Ascending aorta (tissue), 2 donors: ENCODE measurements at regions of chr16 and their contacts with region 1.

Region 1: DNA sequence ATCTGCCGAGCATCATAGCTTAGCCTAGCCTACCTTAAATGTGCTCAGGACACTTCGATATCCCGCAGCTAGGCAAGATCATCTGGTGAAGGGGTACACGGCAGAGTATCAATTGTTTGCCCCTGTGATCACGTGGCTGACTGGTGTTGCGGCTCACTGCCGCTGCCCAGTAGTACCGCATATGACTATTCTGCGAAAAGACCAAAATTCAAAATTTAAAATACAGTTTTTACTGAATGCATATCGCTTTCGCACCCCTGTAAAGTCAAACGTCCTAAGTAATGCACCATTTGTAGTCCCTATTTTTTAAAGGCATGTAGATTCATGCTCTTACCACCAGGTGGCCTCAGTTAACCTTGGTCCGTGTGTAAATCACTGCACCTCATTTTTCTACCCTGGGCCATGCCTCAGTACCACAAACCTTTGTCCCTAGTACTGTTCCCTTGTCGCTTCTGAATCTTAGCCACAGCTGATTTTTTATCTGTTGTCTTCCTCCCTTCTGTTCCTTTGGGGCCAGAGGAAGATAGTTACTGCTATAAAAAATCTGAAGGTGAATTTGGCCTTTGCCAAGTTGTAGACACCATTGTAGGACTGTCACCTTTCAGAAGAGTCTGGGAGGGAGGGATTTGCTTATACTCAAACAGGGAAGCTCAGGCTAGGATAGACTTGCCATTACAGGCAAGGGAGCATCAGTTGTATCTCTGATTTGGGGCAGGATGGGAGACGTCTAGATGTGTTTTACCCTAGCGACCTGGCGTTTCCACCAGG is 34.4 kb downstream of the WWP2 start:
- DNase-seq: no peak
- H3K4me3 ChIP-seq: peak overlapping the region in 1 of 2 donors; percentile 46
- H3K27ac ChIP-seq: peak overlapping the region in 1 of 2 donors; percentile 17
- H3K4me1 ChIP-seq: peaks cover 0 to 5% of the 10 kb centered on the region in 2 donors
- H3K27me3 ChIP-seq: no peaks in the 10 kb centered on the region
- CTCF ChIP-seq: peak; percentile 82 to 89 (median 89)

Region 2: GRCh38 chr16:69186642-69187445 is 609.7 kb before region 1 on chr16 and contains the start of gene SNTB2:
- intact Hi-C with region 1: no loop called
- DNase-seq: peak; percentile 76 to 97
- H3K4me3 ChIP-seq: peak within 1 kb of the TSS; percentile 83 to 91
- H3K27ac ChIP-seq: peak within 1 kb of the TSS; percentile 93 to 95
- H3K4me1 ChIP-seq: peaks cover 5 to 39% of the 10 kb centered on the region in 2 donors
- H3K27me3 ChIP-seq: no peaks in the 10 kb centered on the region
- CTCF ChIP-seq: no peak
- total RNA-seq, gene SNTB2: 19.7 TPM

Region 3: GRCh38 chr16:69494993-69495392 is 301.5 kb before region 1 on chr16:
- intact Hi-C with region 1: no loop called
- DNase-seq: no peak
- H3K4me3 ChIP-seq: no peak overlapping the region
- H3K27ac ChIP-seq: no peak overlapping the region
- H3K4me1 ChIP-seq: no peaks in the 10 kb centered on the region
- H3K27me3 ChIP-seq: no peaks in the 10 kb centered on the region
- CTCF ChIP-seq: no peak

Region 4: GRCh38 chr16:69688589-69688988 is 107.9 kb before region 1 on chr16:
- intact Hi-C with region 1: no loop called
- DNase-seq: no peak
- H3K4me3 ChIP-seq: no peak overlapping the region
- H3K27ac ChIP-seq: no peak overlapping the region
- H3K4me1 ChIP-seq: no peaks in the 10 kb centered on the region
- H3K27me3 ChIP-seq: no peaks in the 10 kb centered on the region
- CTCF ChIP-seq: no peak

Region 5: GRCh38 chr16:69773260-69773947 is 23.1 kb before region 1 on chr16:
- intact Hi-C with region 1: no loop called
- DNase-seq: no peak
- H3K4me3 ChIP-seq: no peak overlapping the region
- H3K27ac ChIP-seq: no peak overlapping the region
- H3K4me1 ChIP-seq: no peaks in the 10 kb centered on the region
- H3K27me3 ChIP-seq: no peaks in the 10 kb centered on the region
- CTCF ChIP-seq: no peak

Region 6: GRCh38 chr16:69848637-69849545 is 52.4 kb after region 1 on chr16:
- intact Hi-C with region 1: loop called (anchors 10 kb)
- DNase-seq: peak; percentile 82 to 97
- H3K4me3 ChIP-seq: peak overlapping the region; percentile 20 to 29
- H3K27ac ChIP-seq: peak overlapping the region; percentile 78 to 82
- H3K4me1 ChIP-seq: peaks cover 6 to 20% of the 10 kb centered on the region in 2 donors
- H3K27me3 ChIP-seq: no peaks in the 10 kb centered on the region
- CTCF ChIP-seq: peak in 1 of 3 experiments; percentile 26